IMR-90 (cell line): ENCODE measurements at regions of chrX and their contacts with region 1.

Region 1: DNA sequence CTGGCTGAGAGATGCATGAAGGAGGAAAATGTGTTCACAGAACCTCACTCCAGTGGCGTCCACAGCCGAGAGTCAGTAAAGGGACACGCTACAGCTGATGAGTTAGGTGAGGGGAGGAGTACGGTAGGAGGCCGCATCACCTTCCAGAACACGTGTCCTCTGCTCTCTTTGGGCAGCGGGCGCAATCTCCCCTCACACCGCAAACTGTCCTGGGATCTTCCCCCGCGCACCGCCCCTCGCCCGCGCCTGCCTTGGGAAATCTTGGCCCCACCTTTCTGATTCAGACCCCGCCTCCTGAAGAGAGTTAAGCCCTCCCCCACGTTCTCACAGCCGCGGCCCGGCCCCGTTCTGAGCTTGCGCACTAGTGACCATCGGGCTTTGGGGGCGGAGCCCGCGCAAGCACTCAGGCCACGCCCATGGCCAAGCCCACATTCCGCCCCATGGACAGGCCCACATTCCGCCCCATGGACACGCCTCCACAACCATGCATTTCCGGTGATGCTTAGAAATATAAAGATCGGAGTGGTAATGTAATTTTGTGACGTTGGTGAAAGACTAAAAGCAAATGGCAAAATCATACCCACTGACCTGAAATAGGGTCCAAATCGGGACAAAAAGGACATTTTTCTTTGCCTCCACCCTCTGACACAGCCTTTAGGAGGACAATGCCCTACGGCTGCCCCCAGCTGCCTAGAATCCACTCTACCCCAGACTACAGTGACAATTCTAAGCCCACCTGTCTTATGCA is 13.3 kb downstream of the SMIM10 start:
- DNase-seq: peak; percentile 87
- ATAC-seq: peak; percentile 92
- H3K4me3 ChIP-seq: peak overlapping the region; percentile 64
- H3K27ac ChIP-seq: peak overlapping the region; percentile 74
- H3K4me1 ChIP-seq: peaks cover 5% of the 10 kb centered on the region
- H3K27me3 ChIP-seq: no peaks in the 10 kb centered on the region; the same call in 1 of the 2 replicates
- CTCF ChIP-seq: no peak
- POLR2A ChIP-seq: no peak
- RAD21 ChIP-seq: no peak

Region 2: GRCh38 chrX:134460005-134460861 is 543.8 kb before region 1 on chrX and contains the start of gene HPRT1:
- CTCF ChIA-PET with region 1: no interaction called
- POLR2A ChIA-PET with region 1: no interaction called
- dilution Hi-C with region 1: no loop called
- in situ Hi-C with region 1: loop called (anchors 25 kb)
- intact Hi-C with region 1: no loop called
- DNase-seq: peak; percentile 66
- ATAC-seq: peak; percentile 96
- H3K4me3 ChIP-seq: peak within 1 kb of the TSS; percentile 89
- H3K27ac ChIP-seq: peak within 1 kb of the TSS; percentile 39
- H3K4me1 ChIP-seq: no peaks in the 10 kb centered on the region; the same call in 1 of the 2 replicates
- H3K27me3 ChIP-seq: no peaks in the 10 kb centered on the region
- CTCF ChIP-seq: no peak
- POLR2A ChIP-seq: no peak; the same call in none of the 2 replicates
- RAD21 ChIP-seq: no peak
- total RNA-seq, gene HPRT1: 7.0 and 15.6 TPM in 2 replicates

Region 3: GRCh38 chrX:134792077-134792476 is 212.0 kb before region 1 on chrX:
- CTCF ChIA-PET with region 1: no interaction called
- POLR2A ChIA-PET with region 1: no interaction called
- dilution Hi-C with region 1: no loop called
- in situ Hi-C with region 1: no loop called
- intact Hi-C with region 1: loop called (anchors 5 kb)
- DNase-seq: peak; percentile 22
- ATAC-seq: no peak
- H3K4me3 ChIP-seq: no peak overlapping the region
- H3K27ac ChIP-seq: no peak overlapping the region
- H3K4me1 ChIP-seq: peaks cover 7% of the 10 kb centered on the region
- H3K27me3 ChIP-seq: no peaks in the 10 kb centered on the region
- CTCF ChIP-seq: no peak
- POLR2A ChIP-seq: no peak
- RAD21 ChIP-seq: no peak